ENCODE measurements at regions of chr7 and their contacts with region 1.

Region 1: GRCh38 chr7:149028346-149029109 is at the start of gene PDIA4:
- DNase-seq: peak; percentile 100
- ATAC-seq: peak; percentile 90
- H3K4me3 Mint-ChIP-seq: peak within 1 kb of the TSS; percentile 93
- H3K27ac Mint-ChIP-seq: peak within 1 kb of the TSS; percentile 93
- H3K4me1 Mint-ChIP-seq: peaks cover 31% of the 10 kb centered on the region
- H3K27me3 Mint-ChIP-seq: no peaks in the 10 kb centered on the region
- CTCF ChIP-seq: no peak
- total RNA-seq, gene PDIA4: 72.6 to 75.7 TPM

Region 2: GRCh38 chr7:148987010-148987750 is 41.3 kb before region 1 on chr7:
- CTCF ChIA-PET with region 1: interaction called, 3 read pairs
- POLR2A ChIA-PET with region 1: interaction called, 11 read pairs
- intact Hi-C with region 1: no loop called
- DNase-seq: peak; percentile 90
- ATAC-seq: peak; percentile 81
- H3K4me3 Mint-ChIP-seq: peak overlapping the region; percentile 90
- H3K27ac Mint-ChIP-seq: peak overlapping the region; percentile 95
- H3K4me1 Mint-ChIP-seq: peaks cover 44% of the 10 kb centered on the region
- H3K27me3 Mint-ChIP-seq: peaks cover 4% of the 10 kb centered on the region
- CTCF ChIP-seq: no peak

Measured in activated CD8-positive, alpha-beta T cell treated with anti-CD3 and anti-CD28 coated beads for 36 hours (primary cell).